ENCODE measurements at regions of chr20 and their contacts with region 1.

Region 1: GRCh38 chr20:3502878-3503277 is 32.1 kb downstream of the ATRN start:
- DNase-seq: no peak
- H3K4me3 ChIP-seq: no peak overlapping the region
- H3K27ac ChIP-seq: no peak overlapping the region
- H3K4me1 ChIP-seq: peaks cover 8% of the 10 kb centered on the region
- H3K27me3 ChIP-seq: no peaks in the 10 kb centered on the region
- CTCF ChIP-seq: no peak

Region 2: GRCh38 chr20:3543901-3544507 is 41.1 kb after region 1 on chr20:
- CTCF ChIA-PET with region 1: no interaction called
- dilution Hi-C with region 1: no loop called
- in situ Hi-C with region 1: no loop called
- intact Hi-C with region 1: no loop called
- DNase-seq: peak; percentile 99
- H3K4me3 ChIP-seq: no peak overlapping the region
- H3K27ac ChIP-seq: peak overlapping the region; percentile 94
- H3K4me1 ChIP-seq: peaks cover 49% of the 10 kb centered on the region
- H3K27me3 ChIP-seq: no peaks in the 10 kb centered on the region
- CTCF ChIP-seq: no peak

Region 3: GRCh38 chr20:3577366-3577765 is 74.5 kb after region 1 on chr20:
- CTCF ChIA-PET with region 1: no interaction called
- dilution Hi-C with region 1: loop called (anchors 5 kb)
- in situ Hi-C with region 1: no loop called
- intact Hi-C with region 1: no loop called
- DNase-seq: no peak
- H3K4me3 ChIP-seq: no peak overlapping the region
- H3K27ac ChIP-seq: no peak overlapping the region
- H3K4me1 ChIP-seq: no peaks in the 10 kb centered on the region
- H3K27me3 ChIP-seq: no peaks in the 10 kb centered on the region
- CTCF ChIP-seq: no peak

Measured in mammary epithelial cell (primary cell).